PC-9 (cell line): ENCODE measurements at regions of chr5 and their contacts with region 1.

Region 1: GRCh38 chr5:75395277-75395676 is 58.3 kb downstream of the HMGCR start:
- DNase-seq: no peak
- H3K4me3 ChIP-seq: no peak overlapping the region
- H3K27ac ChIP-seq: no peak overlapping the region
- H3K4me1 ChIP-seq: no peaks in the 10 kb centered on the region
- H3K27me3 ChIP-seq: no peaks in the 10 kb centered on the region
- CTCF ChIP-seq: no peak

Region 2: GRCh38 chr5:77015938-77016569 is 1620.8 kb after region 1 on chr5:
- CTCF ChIA-PET with region 1: no interaction called
- POLR2A ChIA-PET with region 1: interaction called, 13 read pairs
- intact Hi-C with region 1: no loop called
- DNase-seq: peak in 1 of 2 experiments; percentile 35
- H3K4me3 ChIP-seq: no peak overlapping the region
- H3K27ac ChIP-seq: no peak overlapping the region
- H3K4me1 ChIP-seq: no peaks in the 10 kb centered on the region
- H3K27me3 ChIP-seq: no peaks in the 10 kb centered on the region
- CTCF ChIP-seq: peak; percentile 61